Caco-2 (cell line): ENCODE measurements at regions of chr3 and their contacts with region 1.

Region 1: DNA sequence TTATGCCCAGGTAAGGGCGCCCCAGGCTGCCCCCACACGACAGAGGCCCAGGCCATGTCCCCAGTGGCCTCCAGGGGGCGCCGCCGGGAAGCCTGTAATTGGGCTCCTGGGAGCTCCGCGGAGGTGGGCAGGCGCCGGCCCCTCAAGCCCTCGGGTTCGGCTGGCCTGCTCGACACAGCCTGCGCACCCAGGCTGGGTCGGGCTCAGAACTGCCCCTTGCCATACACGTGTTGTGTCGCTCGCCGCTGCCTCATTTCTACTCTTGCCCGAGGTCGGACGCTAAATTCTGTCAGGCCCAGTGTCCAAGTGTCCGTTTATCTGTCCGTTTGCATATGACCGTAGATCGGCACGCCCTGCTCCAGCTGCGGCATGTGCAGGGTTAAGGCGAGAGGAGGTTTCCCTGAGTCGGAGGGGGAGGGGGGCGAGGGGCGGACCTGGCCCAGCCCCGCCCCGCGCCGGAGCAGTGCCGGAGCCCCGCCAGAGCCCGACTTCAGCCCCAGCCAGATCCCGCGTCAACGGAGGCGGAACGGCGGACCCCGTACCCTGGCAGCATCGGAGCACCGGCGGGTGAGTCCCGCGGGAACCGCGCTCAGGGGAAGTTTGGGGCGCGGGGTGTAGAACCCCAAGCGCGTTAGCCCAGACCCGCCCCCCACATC is at the start of gene KLHDC8B:
- DNase-seq: peak; percentile 88 to 90
- H3K4me3 ChIP-seq: peak within 1 kb of the TSS; percentile 70
- H3K4me3 Mint-ChIP-seq: peak within 1 kb of the TSS; percentile 88
- H3K27ac Mint-ChIP-seq: peak within 1 kb of the TSS; percentile 63
- H3K4me1 ChIP-seq: peaks cover 11% of the 10 kb centered on the region
- H3K4me1 Mint-ChIP-seq: peaks cover 7% of the 10 kb centered on the region
- H3K27me3 ChIP-seq: no peaks in the 10 kb centered on the region
- H3K27me3 Mint-ChIP-seq: no peaks in the 10 kb centered on the region
- CTCF ChIP-seq: peak; percentile 93
- total RNA-seq, gene KLHDC8B: 7.4 and 8.8 TPM in 2 replicates

Region 2: GRCh38 chr3:49238274-49239127 is 67.3 kb after region 1 on chr3:
- CTCF ChIA-PET with region 1: no interaction called
- POLR2A ChIA-PET with region 1: no interaction called
- intact Hi-C with region 1: no loop called
- DNase-seq: peak; percentile 48 to 50
- H3K4me3 ChIP-seq: no peak overlapping the region
- H3K4me3 Mint-ChIP-seq: no peak overlapping the region
- H3K27ac Mint-ChIP-seq: no peak overlapping the region
- H3K4me1 ChIP-seq: no peaks in the 10 kb centered on the region
- H3K4me1 Mint-ChIP-seq: no peaks in the 10 kb centered on the region
- H3K27me3 ChIP-seq: no peaks in the 10 kb centered on the region
- H3K27me3 Mint-ChIP-seq: no peaks in the 10 kb centered on the region
- CTCF ChIP-seq: no peak

Region 3: GRCh38 chr3:49255112-49255511 is 83.9 kb after region 1 on chr3:
- CTCF ChIA-PET with region 1: no interaction called
- POLR2A ChIA-PET with region 1: no interaction called
- intact Hi-C with region 1: loop called (anchors 10 kb)
- DNase-seq: no peak
- H3K4me3 ChIP-seq: no peak overlapping the region
- H3K4me3 Mint-ChIP-seq: no peak overlapping the region
- H3K27ac Mint-ChIP-seq: no peak overlapping the region
- H3K4me1 ChIP-seq: no peaks in the 10 kb centered on the region
- H3K4me1 Mint-ChIP-seq: no peaks in the 10 kb centered on the region
- H3K27me3 ChIP-seq: no peaks in the 10 kb centered on the region
- H3K27me3 Mint-ChIP-seq: no peaks in the 10 kb centered on the region
- CTCF ChIP-seq: no peak

Region 4: DNA sequence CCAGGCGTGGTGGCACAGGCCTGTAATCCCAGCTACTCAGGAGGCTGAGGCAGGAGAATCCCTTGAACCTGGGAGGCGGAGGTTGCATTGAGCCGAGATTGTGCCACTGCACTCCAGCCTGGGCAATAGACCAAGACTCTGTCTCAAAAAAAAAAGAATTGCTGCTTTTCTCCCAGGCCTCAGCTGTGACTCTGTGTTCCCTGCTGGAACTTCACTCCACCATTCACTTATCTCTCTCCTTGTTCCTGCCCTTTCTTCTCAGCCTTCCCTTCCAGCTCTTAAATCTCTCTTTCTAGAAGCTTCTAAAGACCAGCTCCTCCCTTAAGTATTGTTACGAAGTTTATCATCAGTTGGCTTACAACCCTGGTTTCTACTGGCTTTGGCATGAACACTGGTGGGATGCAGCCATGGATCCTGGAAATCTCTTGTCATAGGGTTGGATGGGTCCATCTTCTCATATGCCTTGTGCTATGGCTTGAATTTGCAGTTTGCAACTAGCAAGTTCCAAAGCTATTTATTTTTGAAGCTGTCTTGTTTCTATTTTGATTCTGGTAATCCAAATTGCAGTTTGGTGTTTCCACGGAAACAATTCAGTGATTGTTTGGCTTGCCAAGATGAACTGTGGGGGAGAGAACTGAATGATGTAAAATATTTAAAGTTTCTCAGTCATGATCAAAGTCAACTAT is 95.3 kb after region 1 on chr3:
- CTCF ChIA-PET with region 1: no interaction called
- POLR2A ChIA-PET with region 1: interaction called, 10 read pairs
- intact Hi-C with region 1: no loop called
- DNase-seq: no peak
- H3K4me3 ChIP-seq: no peak overlapping the region
- H3K4me3 Mint-ChIP-seq: no peak overlapping the region
- H3K27ac Mint-ChIP-seq: no peak overlapping the region
- H3K4me1 ChIP-seq: peaks cover 7% of the 10 kb centered on the region
- H3K4me1 Mint-ChIP-seq: peaks cover 14% of the 10 kb centered on the region
- H3K27me3 ChIP-seq: no peaks in the 10 kb centered on the region
- H3K27me3 Mint-ChIP-seq: no peaks in the 10 kb centered on the region
- CTCF ChIP-seq: no peak